ENCODE measurements at regions of chr12 and their contacts with region 1.

Region 1: GRCh38 chr12:65430571-65431306 is 152.3 kb downstream of the MSRB3 start:
- DNase-seq: peak; percentile 94
- ATAC-seq: peak; percentile 92
- H3K4me3 ChIP-seq: peak overlapping the region; percentile 14; the same call in 1 of the 2 replicates
- H3K27ac ChIP-seq: peak overlapping the region; percentile 56
- H3K4me1 ChIP-seq: peaks cover 47% of the 10 kb centered on the region
- H3K27me3 ChIP-seq: no peaks in the 10 kb centered on the region
- CTCF ChIP-seq: no peak

Region 2: DNA sequence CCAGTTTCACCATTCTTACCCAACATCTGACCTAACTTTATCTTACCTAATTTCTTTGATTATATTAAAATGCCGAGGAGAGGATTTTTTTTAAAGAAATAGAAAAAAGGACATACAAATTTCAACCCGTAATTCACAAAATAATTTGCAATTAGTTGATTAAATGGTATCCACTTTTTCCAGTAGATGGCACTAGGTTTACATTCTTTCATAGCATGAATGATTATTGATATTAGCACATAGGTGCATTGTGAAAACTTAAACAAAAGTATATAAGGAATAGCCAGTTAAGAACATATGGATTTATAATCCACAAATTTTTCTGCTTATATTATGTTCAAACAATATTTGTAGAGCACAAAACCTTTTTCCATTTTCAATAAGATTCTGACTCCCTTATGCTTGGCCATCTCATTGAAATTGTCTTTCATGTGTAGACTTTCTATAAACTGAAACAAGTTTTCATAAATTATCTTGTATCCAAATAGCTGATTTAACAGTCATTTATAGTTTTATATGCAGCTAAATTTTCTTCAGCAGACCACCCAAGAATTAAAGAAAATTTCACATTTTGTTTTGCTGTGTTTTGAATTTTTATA is 116.9 kb before region 1 on chr12:
- CTCF ChIA-PET with region 1: no interaction called
- POLR2A ChIA-PET with region 1: interaction called, 3 read pairs
- intact Hi-C with region 1: loop called (anchors 5 kb)
- DNase-seq: peak; percentile 79
- ATAC-seq: peak; percentile 46; the same call in 1 of the 2 replicates
- H3K4me3 ChIP-seq: no peak overlapping the region; the same call in 1 of the 2 replicates
- H3K27ac ChIP-seq: peak overlapping the region; percentile 30
- H3K4me1 ChIP-seq: peaks cover 24% of the 10 kb centered on the region
- H3K27me3 ChIP-seq: no peaks in the 10 kb centered on the region
- CTCF ChIP-seq: peak; percentile 91